ENCODE measurements at regions of chr10 and their contacts with region 1.

Region 1: DNA sequence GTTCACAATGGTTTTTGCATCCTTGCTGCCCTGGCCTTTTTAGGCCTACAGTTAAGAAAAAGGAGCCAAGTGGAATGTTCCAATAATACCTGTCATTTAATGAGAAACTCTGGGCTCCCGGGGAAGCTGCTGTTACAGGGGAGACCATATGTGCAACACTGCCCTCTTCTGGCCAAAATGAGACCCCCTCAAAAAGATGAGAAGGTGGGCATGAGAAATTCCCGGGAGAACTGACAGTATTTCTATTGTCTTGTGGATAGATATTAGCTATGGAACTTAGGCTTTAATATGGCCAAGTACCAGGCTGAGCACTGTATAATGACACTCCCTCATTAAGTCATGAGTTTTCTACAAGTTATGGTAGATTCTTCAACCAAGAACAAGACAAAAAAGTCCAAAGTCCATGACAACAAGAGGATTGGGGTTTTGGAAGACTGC is 99.4 kb downstream of the CCDC3 start:
- DNase-seq: peak; percentile 56 to 78 (median 62)
- H3K4me3 ChIP-seq: no peak overlapping the region
- H3K27ac ChIP-seq: no peak overlapping the region
- H3K4me1 ChIP-seq: peaks cover 4% of the 10 kb centered on the region
- H3K27me3 ChIP-seq: no peaks in the 10 kb centered on the region
- CTCF ChIP-seq: peak; percentile 53 to 74 (median 61)
- EP300 ChIP-seq: no peak
- POLR2A ChIP-seq: no peak

Region 2: DNA sequence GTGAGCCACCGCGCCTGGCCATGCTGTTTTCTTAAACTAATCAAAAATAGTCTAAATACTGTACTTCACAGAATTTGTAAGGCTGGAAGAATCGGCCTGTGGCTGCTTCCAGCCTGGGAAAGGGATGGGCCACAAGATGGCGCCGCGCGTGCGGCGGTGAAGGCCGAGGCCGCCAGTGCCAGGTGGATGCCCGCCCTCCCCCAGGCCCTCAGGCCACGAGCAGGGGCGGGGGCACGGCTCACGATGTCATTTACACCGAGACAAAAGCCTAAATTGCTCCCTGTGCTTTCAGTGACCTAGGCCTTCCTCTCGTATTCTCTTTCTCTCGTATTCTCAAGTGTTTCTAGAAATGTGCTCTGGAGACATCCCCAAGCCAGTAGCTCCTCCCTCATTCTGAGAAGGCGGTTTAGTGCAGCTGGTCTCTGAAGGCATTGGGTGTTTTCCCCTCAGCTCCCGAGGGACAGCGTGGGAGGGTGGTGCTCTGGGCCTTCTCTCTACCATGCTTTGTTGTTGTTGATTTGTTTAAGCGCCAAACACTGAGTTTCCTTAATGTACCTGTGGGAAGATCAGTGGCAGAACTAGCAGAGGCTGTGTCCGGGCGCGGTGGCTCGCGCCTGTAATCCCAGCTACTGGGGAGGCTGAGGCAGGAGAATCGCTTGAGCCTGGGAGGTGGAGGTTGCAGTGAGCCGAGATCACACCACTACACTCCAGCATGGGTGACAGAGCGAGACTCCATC is 637.8 kb before region 1 on chr10:
- intact Hi-C with region 1: loop called in 1 of 4 experiments (anchors 10 kb)
- DNase-seq: peak; percentile 69 to 87 (median 78)
- H3K4me3 ChIP-seq: no peak overlapping the region
- H3K27ac ChIP-seq: no peak overlapping the region
- H3K4me1 ChIP-seq: no peaks in the 10 kb centered on the region
- H3K27me3 ChIP-seq: no peaks in the 10 kb centered on the region
- CTCF ChIP-seq: peak; percentile 74 to 84 (median 77)
- EP300 ChIP-seq: no peak
- POLR2A ChIP-seq: no peak

Region 3: DNA sequence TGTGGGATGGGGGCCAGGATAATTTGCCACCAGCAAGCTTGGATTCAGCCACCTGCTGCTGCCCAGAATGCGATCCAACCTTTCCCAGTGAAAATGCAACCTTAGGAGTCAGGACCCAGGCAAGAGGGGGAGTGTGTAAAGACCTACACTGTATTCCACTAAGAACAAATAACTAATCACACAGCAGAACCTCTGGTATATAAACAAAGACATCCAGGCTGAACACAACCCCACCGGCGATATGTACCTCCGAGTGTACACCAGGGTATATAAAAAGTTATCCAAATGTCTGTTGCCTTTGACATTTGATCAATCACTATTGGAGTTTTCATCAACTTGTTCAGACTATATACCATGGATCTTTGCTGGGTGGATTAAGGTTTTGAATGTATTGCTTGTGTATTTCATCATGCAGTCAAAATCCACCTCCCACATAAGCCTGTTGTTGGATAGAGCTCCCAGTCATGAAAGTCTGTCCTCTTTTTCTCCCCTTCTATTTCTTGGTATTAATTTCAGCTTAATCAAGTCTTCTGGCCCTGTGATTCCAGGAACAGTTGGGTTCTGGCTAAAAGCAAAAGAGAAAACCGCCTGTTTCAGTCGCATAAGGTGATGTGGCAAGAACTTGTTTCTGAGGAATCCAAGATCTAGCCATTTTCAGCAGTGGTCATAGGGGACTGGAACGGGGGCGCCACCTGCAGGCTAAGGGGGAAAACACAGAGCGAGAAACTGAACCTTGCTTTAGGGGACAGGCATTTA is 191.4 kb before region 1 on chr10:
- intact Hi-C with region 1: loop called in 3 of 4 experiments (anchors 5 to 10 kb)
- DNase-seq: peak; percentile 62 to 87 (median 82)
- H3K4me3 ChIP-seq: no peak overlapping the region
- H3K27ac ChIP-seq: peak overlapping the region in 1 of 2 donors; percentile 37
- H3K4me1 ChIP-seq: peaks cover 9% of the 10 kb centered on the region
- H3K27me3 ChIP-seq: no peaks in the 10 kb centered on the region
- CTCF ChIP-seq: peak; percentile 67 to 87 (median 82)
- EP300 ChIP-seq: no peak
- POLR2A ChIP-seq: peak; percentile 28

Region 4: GRCh38 chr10:12729885-12730284 is 172.3 kb before region 1 on chr10:
- intact Hi-C with region 1: loop called in 1 of 4 experiments (anchors 5 kb)
- DNase-seq: no peak
- H3K4me3 ChIP-seq: no peak overlapping the region
- H3K27ac ChIP-seq: no peak overlapping the region
- H3K4me1 ChIP-seq: peaks cover 3% of the 10 kb centered on the region
- H3K27me3 ChIP-seq: no peaks in the 10 kb centered on the region
- CTCF ChIP-seq: no peak
- EP300 ChIP-seq: no peak
- POLR2A ChIP-seq: no peak

Region 5: DNA sequence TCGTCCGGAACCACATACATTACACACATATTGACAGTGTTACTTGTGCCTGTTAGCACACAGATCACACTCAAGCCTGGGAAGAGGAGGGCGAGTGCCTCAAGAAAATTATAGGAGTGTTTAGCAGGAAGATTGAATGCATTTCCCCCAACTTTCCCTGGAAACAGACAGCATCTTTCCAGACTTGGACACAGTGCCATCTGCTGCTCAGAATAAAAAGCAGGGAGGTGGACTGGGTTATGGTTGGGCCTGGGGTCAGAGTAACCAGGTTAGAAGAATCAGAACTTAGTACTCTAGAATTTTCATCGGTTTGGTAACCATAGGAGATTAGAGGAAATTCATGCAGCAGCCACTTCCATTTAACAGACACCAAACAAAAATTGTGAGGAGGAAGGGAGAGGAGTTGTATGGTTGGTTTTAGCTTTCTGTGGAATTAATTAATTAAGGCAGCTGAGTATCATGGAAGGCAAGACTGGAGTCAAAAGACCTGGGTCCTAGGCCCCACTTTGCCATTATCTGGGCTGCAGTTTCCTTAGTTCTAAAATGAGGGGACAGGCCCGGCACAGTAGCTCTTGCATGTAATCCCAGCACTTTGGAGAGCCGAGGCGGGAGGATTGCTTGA is 154.4 kb after region 1 on chr10:
- intact Hi-C with region 1: loop called in 1 of 4 experiments (anchors 10 kb)
- DNase-seq: peak in 1 of 5 donors; percentile 29
- H3K4me3 ChIP-seq: no peak overlapping the region
- H3K27ac ChIP-seq: no peak overlapping the region
- H3K4me1 ChIP-seq: no peaks in the 10 kb centered on the region
- H3K27me3 ChIP-seq: no peaks in the 10 kb centered on the region
- CTCF ChIP-seq: peak in 1 of 3 donors; percentile 13
- EP300 ChIP-seq: no peak
- POLR2A ChIP-seq: no peak

Measured in ovary (tissue), 10 donors.